ENCODE measurements at regions of chr2 and their contacts with region 1.

Region 1: GRCh38 chr2:230268606-230269243 is 43.2 kb downstream of the SP140 start:
- DNase-seq: peak; percentile 32
- H3K4me3 Mint-ChIP-seq: no peak overlapping the region
- H3K27ac Mint-ChIP-seq: peak overlapping the region; percentile 59
- H3K4me1 Mint-ChIP-seq: peaks cover 52% of the 10 kb centered on the region
- H3K27me3 Mint-ChIP-seq: no peaks in the 10 kb centered on the region

Region 2: DNA sequence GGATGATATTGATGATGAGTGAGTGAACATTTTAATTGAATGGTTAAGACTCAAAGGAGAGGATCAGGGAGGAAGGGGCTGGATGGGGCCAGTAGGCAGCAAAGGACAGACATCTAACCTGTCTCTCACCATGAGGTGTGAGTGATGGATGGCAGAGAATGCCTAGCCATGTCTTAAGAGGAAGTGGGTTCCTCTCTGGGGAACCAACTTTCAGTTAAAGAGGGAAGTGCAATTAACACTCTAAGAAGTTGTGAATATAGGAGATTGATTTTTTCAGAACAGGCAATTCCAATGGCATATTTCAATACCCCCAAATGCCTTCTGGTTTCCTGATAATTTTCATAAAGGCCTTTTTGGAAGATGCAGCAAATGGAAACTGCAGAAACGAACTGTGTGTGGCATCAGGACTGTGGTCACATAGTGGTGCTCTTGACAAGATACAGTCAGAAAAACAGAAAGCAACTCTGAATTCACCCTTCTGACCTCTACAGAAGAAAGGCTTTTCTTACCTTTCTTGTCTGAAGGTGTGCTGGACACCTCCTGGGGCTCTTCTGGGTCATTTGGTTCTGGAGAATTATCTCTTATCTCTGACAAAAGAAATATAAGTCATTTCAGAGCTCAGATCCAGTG is 59.2 kb before region 1 on chr2:
- CTCF ChIA-PET with region 1: no interaction called
- POLR2A ChIA-PET with region 1: no interaction called
- intact Hi-C with region 1: no loop called
- DNase-seq: no peak
- H3K4me3 Mint-ChIP-seq: no peak overlapping the region
- H3K27ac Mint-ChIP-seq: no peak overlapping the region
- H3K4me1 Mint-ChIP-seq: peaks cover 18% of the 10 kb centered on the region
- H3K27me3 Mint-ChIP-seq: no peaks in the 10 kb centered on the region

Region 3: GRCh38 chr2:230234845-230235244 is 33.9 kb before region 1 on chr2:
- CTCF ChIA-PET with region 1: no interaction called
- POLR2A ChIA-PET with region 1: no interaction called
- intact Hi-C with region 1: loop called (anchors 2 kb)
- DNase-seq: no peak
- H3K4me3 Mint-ChIP-seq: peak overlapping the region; percentile 23
- H3K27ac Mint-ChIP-seq: peak overlapping the region; percentile 83
- H3K4me1 Mint-ChIP-seq: peaks cover 55% of the 10 kb centered on the region
- H3K27me3 Mint-ChIP-seq: no peaks in the 10 kb centered on the region

Region 4: DNA sequence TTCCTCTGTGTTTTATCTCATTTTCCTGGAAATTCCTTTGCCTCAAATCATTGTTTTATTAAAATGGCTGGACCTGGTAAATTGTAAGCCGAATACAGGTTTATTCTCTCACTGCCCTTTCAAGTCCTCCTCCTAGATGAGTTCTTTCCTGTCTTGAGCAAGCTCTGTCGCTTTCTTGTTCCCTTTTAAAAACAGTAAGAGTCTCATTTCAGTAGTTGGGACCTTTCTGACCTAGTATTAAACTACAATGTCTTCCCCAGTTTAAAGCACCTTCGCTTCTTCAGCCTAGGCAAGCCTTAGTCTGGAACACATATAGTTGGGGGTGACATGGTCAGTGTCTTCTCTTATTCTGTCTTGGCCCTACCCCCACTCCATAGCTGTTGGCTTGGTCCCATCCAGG is 17.3 kb after region 1 on chr2:
- CTCF ChIA-PET with region 1: no interaction called
- POLR2A ChIA-PET with region 1: no interaction called
- intact Hi-C with region 1: loop called (anchors 1 kb)
- DNase-seq: no peak
- H3K4me3 Mint-ChIP-seq: no peak overlapping the region
- H3K27ac Mint-ChIP-seq: no peak overlapping the region
- H3K4me1 Mint-ChIP-seq: peaks cover 29% of the 10 kb centered on the region
- H3K27me3 Mint-ChIP-seq: no peaks in the 10 kb centered on the region

Region 5: DNA sequence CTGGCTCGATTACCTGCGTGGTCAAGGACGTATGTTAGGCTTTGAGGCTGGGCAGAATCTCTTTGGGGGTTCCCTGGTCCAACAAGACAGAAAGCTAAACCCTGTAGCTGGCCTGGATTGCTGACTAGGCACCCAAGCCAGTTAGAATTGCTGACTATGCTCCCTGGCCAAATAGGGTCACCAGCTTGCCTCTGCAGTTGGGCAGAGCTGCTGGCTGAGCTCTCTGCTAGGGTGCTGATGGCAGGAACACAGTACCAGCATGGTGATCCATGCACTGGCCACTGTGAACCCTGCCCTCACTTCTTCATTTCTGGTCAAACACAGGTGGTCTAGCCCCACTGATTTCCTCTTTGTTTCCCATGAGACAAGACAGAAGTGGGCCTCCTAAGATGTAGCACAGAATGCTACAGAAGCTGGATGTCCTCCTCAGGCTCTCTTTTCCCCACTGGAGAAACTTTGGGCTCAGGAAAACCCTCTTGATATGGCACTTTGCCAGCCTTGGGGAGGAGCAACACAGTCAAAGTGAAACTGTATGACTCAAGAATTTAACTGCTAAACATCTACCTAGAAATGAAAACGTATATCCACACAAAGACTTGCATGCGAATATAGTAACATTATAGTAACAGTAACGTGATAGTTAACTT is 79.1 kb after region 1 on chr2:
- CTCF ChIA-PET with region 1: no interaction called
- POLR2A ChIA-PET with region 1: no interaction called
- intact Hi-C with region 1: loop called (anchors 5 kb)
- DNase-seq: peak; percentile 70
- H3K4me3 Mint-ChIP-seq: peak overlapping the region; percentile 47
- H3K27ac Mint-ChIP-seq: peak overlapping the region; percentile 92
- H3K4me1 Mint-ChIP-seq: peaks cover 80% of the 10 kb centered on the region
- H3K27me3 Mint-ChIP-seq: no peaks in the 10 kb centered on the region

Region 6: DNA sequence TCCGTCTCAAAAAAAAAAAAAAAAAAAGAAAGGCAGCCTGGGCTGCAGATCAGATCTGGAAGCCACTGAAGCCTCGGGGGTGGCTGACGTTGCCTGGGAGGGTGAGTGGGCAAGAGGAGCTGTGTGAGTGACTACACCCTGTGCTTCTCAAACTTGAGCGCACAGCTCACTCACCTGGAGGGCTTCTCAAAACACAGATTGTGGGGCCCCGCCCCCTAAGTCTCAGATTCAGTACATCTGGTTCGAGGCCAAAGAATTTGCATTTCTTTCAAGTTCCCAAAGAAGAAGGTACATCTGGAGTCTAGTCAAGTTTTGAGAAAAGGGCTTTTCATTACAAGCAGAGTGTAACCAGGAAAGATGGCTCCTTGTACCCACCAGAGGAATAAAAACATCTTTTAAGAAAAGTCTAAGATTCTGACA is 346.2 kb after region 1 on chr2:
- CTCF ChIA-PET with region 1: no interaction called
- POLR2A ChIA-PET with region 1: no interaction called
- intact Hi-C with region 1: loop called (anchors 5 kb)
- DNase-seq: peak; percentile 78
- H3K4me3 Mint-ChIP-seq: no peak overlapping the region
- H3K27ac Mint-ChIP-seq: peak overlapping the region; percentile 56
- H3K4me1 Mint-ChIP-seq: peaks cover 22% of the 10 kb centered on the region
- H3K27me3 Mint-ChIP-seq: no peaks in the 10 kb centered on the region